WTC11 (cell line): ENCODE measurements at regions of chr1 and their contacts with region 1.

Region 1: DNA sequence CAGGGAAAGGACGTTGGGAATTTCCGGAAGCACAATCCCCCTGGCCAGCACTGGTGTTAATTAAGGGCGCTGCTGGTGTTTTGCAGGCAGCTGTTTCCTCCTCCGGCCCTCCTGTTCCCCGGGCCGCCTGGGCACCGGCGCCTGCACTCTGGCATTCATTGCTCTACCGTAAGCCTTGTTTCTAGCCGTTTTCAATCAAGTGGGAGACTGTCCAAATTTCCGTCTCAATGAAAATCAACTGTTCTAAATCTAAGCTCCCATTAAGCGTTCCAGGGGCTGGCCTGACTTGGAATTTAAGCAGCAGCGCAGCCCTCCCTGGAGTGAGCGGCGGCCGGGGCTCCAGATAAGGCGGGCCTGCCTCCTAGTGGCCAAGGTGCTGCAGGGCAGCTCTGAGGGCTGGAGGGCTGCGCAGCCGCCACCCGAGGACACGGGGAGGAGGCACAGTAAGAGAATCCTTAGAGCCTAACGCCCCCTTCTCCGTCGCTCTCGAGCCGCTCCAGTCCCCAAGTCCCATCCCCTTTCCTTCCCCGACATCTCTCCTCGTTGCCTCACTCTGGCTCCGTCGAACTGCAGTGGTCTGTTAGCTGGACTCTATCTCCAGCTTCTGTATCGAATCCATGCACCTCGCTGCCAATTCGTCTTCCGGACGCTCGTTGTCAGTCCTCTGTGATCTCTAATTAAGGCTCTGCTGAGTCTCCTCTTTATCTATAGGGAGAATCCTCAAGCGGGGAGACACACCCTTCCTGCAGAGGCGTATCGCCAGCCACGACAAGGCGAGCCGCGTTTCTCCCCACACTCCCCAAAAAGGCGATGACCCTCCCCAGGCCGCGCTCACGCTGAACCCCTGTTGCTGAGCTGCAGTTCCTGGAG is 57.8 kb upstream of the LRRC8D start:
- DNase-seq: peak; percentile 92
- ATAC-seq: peak; percentile 96
- H3K4me3 Mint-ChIP-seq: peak overlapping the region; percentile 94
- H3K27ac Mint-ChIP-seq: no peak overlapping the region
- H3K4me1 Mint-ChIP-seq: peaks cover 14% of the 10 kb centered on the region
- H3K27me3 Mint-ChIP-seq: peaks cover 36% of the 10 kb centered on the region
- CTCF ChIP-seq: peak; percentile 94

Region 2: GRCh38 chr1:89598450-89599331 is 164.3 kb before region 1 on chr1:
- CTCF ChIA-PET with region 1: interaction called, 22 read pairs
- POLR2A ChIA-PET with region 1: no interaction called
- DNase-seq: no peak
- ATAC-seq: peak; percentile 78
- H3K4me3 Mint-ChIP-seq: peak overlapping the region; percentile 47
- H3K27ac Mint-ChIP-seq: peak overlapping the region; percentile 67
- H3K4me1 Mint-ChIP-seq: peaks cover 56% of the 10 kb centered on the region
- H3K27me3 Mint-ChIP-seq: no peaks in the 10 kb centered on the region
- CTCF ChIP-seq: peak; percentile 47

Region 3: GRCh38 chr1:89615676-89616598 is 147.1 kb before region 1 on chr1:
- CTCF ChIA-PET with region 1: interaction called, 11 read pairs
- POLR2A ChIA-PET with region 1: no interaction called
- DNase-seq: no peak
- ATAC-seq: peak; percentile 82
- H3K4me3 Mint-ChIP-seq: no peak overlapping the region
- H3K27ac Mint-ChIP-seq: no peak overlapping the region
- H3K4me1 Mint-ChIP-seq: peaks cover 6% of the 10 kb centered on the region
- H3K27me3 Mint-ChIP-seq: no peaks in the 10 kb centered on the region
- CTCF ChIP-seq: no peak

Region 4: GRCh38 chr1:89632657-89633247 is 130.3 kb before region 1 on chr1 and contains the start of gene LRRC8C:
- CTCF ChIA-PET with region 1: interaction called, 45 read pairs
- POLR2A ChIA-PET with region 1: no interaction called
- DNase-seq: peak; percentile 78
- ATAC-seq: peak; percentile 75
- H3K4me3 Mint-ChIP-seq: peak within 1 kb of the TSS; percentile 93
- H3K27ac Mint-ChIP-seq: no peak within 1 kb of the TSS
- H3K4me1 Mint-ChIP-seq: peaks cover 18% of the 10 kb centered on the region
- H3K27me3 Mint-ChIP-seq: peaks cover 49% of the 10 kb centered on the region
- CTCF ChIP-seq: 0 out of 2 replicates have a peak, but pooled peaks have one; percentile 15
- total RNA-seq, gene LRRC8C: 1.8 to 2.2 TPM (median 2.1 TPM) in 3 replicates

Region 5: DNA sequence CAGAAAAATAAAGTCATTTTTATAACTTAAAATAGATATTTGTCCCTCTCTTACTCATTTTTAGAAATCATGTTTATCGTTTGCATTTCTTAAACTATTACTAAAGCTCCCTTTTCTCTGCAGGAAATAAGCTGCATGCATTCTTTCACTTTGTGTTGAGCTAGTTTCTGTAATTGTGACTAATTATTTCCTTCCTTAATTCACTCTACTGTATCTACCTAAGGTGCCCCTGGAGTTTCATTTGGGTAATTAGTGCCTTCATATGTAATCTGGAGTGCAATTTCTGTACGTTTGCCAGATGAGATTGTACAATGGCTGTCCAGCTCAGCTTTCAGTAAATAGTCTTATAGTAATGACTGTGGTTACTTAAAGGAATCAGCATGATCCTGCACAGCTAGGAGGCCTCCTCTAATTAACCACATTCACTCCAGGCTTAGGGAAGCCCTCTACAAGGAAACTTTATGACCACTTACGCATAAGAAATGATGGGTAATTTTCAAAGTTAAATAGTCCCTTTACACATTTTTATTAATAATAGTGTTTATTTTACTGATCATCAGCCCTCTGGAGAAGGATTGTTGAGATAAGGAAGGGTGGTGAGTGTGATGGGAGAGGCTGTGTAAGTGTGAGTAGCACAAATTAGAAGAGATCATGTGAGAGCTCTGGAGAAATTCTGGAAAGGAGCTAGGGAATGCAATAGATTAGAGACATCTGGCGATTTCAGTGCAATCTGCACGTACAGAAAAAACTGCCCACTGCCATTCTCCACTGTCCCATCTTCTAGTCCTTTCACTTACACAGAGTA is 43.3 kb before region 1 on chr1:
- CTCF ChIA-PET with region 1: interaction called, 24 read pairs
- POLR2A ChIA-PET with region 1: no interaction called
- DNase-seq: no peak
- ATAC-seq: 0 out of 2 replicates have a peak, but pooled peaks have one; percentile 16
- H3K4me3 Mint-ChIP-seq: no peak overlapping the region
- H3K27ac Mint-ChIP-seq: no peak overlapping the region
- H3K4me1 Mint-ChIP-seq: peaks cover 3% of the 10 kb centered on the region; the same call in 1 of the 2 replicates
- H3K27me3 Mint-ChIP-seq: no peaks in the 10 kb centered on the region
- CTCF ChIP-seq: no peak